Heart left ventricle (tissue), 16 donors: ENCODE measurements at regions of chrX and their contacts with region 1.

Region 1: GRCh38 chrX:41010188-41010846 is 74.9 kb upstream of the USP9X start:
- DNase-seq: peak; percentile 79 to 87 (median 86)
- ATAC-seq: peak; percentile 89 to 97 (median 96)
- H3K4me3 ChIP-seq: peak overlapping the region in 10 of 12 donors; percentile 20 to 52 (median 44)
- H3K27ac ChIP-seq: peak overlapping the region; percentile 63 to 94 (median 86)
- H3K4me1 ChIP-seq: peaks cover 0 to 21% (median 7%) of the 10 kb centered on the region in 12 donors
- H3K27me3 ChIP-seq: peaks cover 0 to 29% (median 0%) of the 10 kb centered on the region in 9 donors
- CTCF ChIP-seq: peak in 7 of 12 donors; percentile 14 to 39 (median 25)
- POLR2A ChIP-seq: no peak

Region 2: GRCh38 chrX:39445336-39445735 is 1565.0 kb before region 1 on chrX:
- intact Hi-C with region 1: no loop called
- DNase-seq: no peak
- ATAC-seq: no peak
- H3K4me3 ChIP-seq: no peak overlapping the region
- H3K27ac ChIP-seq: no peak overlapping the region
- H3K4me1 ChIP-seq: no peaks in the 10 kb centered on the region
- H3K27me3 ChIP-seq: peaks cover 0 to 10% (median 0%) of the 10 kb centered on the region in 9 donors
- CTCF ChIP-seq: peak in 11 of 12 donors; percentile 9 to 45 (median 22)
- POLR2A ChIP-seq: no peak

Region 3: GRCh38 chrX:40746521-40746920 is 263.8 kb before region 1 on chrX:
- intact Hi-C with region 1: no loop called
- DNase-seq: no peak
- ATAC-seq: no peak
- H3K4me3 ChIP-seq: no peak overlapping the region
- H3K27ac ChIP-seq: no peak overlapping the region
- H3K4me1 ChIP-seq: peaks cover 0 to 16% (median 0%) of the 10 kb centered on the region in 12 donors
- H3K27me3 ChIP-seq: peaks cover 0 to 66% (median 0%) of the 10 kb centered on the region in 9 donors
- CTCF ChIP-seq: no peak
- POLR2A ChIP-seq: no peak

Region 4: GRCh38 chrX:41076738-41077137 is 66.4 kb after region 1 on chrX:
- intact Hi-C with region 1: loop called in 6 of 10 experiments (anchors 5 to 10 kb)
- DNase-seq: peak in 1 of 5 donors; percentile 18
- ATAC-seq: no peak
- H3K4me3 ChIP-seq: no peak overlapping the region
- H3K27ac ChIP-seq: no peak overlapping the region
- H3K4me1 ChIP-seq: no peaks in the 10 kb centered on the region
- H3K27me3 ChIP-seq: peaks cover 0 to 31% (median 0%) of the 10 kb centered on the region in 9 donors
- CTCF ChIP-seq: no peak
- POLR2A ChIP-seq: no peak